ENCODE measurements at regions of chr19 and their contacts with region 1.

Region 1: GRCh38 chr19:6218491-6219162 is 61.1 kb downstream of the MLLT1 start:
- DNase-seq: peak; percentile 75 to 82
- ATAC-seq: peak; percentile 73 to 89
- H3K4me3 ChIP-seq: no peak overlapping the region
- H3K27ac ChIP-seq: no peak overlapping the region
- H3K4me1 ChIP-seq: no peaks in the 10 kb centered on the region
- CTCF ChIP-seq: peak; percentile 65
- EP300 ChIP-seq: no peak
- POLR2A ChIP-seq: no peak
- RAD21 ChIP-seq: peak; percentile 61 to 69

Region 2: GRCh38 chr19:6138066-6138465 is 80.6 kb before region 1 on chr19:
- CTCF ChIA-PET with region 1: no interaction called
- POLR2A ChIA-PET with region 1: no interaction called
- DNase-seq: no peak
- ATAC-seq: no peak
- H3K4me3 ChIP-seq: no peak overlapping the region
- H3K27ac ChIP-seq: no peak overlapping the region
- H3K4me1 ChIP-seq: no peaks in the 10 kb centered on the region
- CTCF ChIP-seq: no peak
- EP300 ChIP-seq: no peak
- POLR2A ChIP-seq: no peak
- RAD21 ChIP-seq: no peak

Region 3: DNA sequence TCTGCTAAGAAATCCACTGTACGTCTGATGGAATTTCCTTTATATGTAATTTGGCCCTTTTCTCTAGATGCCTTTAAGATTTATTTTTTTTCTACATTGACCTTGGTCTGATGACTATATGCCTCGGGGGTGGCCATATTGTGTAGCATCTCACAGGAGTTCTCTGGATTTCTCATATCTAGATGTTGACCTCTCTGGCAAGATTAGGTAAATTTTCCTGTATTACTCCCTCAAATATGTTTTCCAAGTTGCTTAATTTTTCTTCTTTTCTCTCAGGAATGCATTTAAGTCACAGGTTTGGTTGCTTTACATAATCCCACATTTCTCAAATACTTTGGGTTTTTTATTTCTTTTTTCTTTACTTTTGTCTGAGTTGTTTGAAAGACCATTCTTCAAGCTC is 47.1 kb before region 1 on chr19:
- CTCF ChIA-PET with region 1: interaction called, 10 read pairs
- POLR2A ChIA-PET with region 1: no interaction called
- DNase-seq: no peak
- ATAC-seq: no peak
- H3K4me3 ChIP-seq: no peak overlapping the region
- H3K27ac ChIP-seq: no peak overlapping the region
- H3K4me1 ChIP-seq: no peaks in the 10 kb centered on the region
- CTCF ChIP-seq: no peak
- EP300 ChIP-seq: no peak
- POLR2A ChIP-seq: no peak
- RAD21 ChIP-seq: no peak

Region 4: DNA sequence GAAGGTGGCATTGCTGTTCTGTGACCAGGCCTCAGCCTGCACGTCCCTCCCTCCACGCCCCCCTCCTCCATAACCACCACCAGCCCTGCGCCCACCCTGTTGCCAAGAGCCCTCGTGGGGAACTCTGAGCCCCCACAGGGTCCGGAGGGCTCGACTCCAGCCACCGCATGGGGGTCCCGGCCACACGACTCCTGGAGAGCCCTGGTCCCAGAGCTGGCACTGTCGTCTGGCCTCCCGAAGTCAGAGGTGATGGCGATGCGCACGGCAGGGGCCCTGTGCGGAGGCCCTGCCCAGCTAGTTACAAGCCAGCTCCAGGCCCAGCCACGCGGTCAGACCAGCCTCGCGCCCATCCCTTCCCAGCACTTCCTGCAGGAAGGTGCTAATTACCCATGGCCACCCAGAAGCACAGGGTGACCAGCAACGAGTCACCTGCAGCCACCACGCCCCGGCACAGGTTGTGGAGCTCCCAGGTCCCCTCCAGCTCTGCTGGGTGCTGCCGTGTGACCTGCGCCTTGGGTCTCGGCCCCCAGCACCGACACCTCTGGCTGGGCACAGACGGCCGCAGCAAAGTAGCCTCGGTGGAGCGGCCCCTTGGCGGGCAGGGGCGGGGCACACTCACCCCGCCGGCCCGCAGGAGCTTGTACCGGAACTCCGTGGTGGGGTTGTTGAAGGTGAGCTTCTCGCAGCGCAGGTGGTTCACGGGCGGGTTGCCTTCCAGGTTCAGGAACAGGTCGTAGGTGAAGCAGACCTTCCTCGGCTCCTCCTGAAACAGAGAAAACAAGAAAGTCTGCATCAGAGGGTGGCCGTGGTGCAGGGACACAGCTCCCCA is 11.5 kb after region 1 on chr19:
- CTCF ChIA-PET with region 1: interaction called, 12 read pairs
- POLR2A ChIA-PET with region 1: no interaction called
- DNase-seq: no peak
- ATAC-seq: no peak
- H3K4me3 ChIP-seq: no peak overlapping the region
- H3K27ac ChIP-seq: no peak overlapping the region
- H3K4me1 ChIP-seq: no peaks in the 10 kb centered on the region
- CTCF ChIP-seq: no peak
- EP300 ChIP-seq: no peak
- POLR2A ChIP-seq: no peak
- RAD21 ChIP-seq: no peak

Region 5: DNA sequence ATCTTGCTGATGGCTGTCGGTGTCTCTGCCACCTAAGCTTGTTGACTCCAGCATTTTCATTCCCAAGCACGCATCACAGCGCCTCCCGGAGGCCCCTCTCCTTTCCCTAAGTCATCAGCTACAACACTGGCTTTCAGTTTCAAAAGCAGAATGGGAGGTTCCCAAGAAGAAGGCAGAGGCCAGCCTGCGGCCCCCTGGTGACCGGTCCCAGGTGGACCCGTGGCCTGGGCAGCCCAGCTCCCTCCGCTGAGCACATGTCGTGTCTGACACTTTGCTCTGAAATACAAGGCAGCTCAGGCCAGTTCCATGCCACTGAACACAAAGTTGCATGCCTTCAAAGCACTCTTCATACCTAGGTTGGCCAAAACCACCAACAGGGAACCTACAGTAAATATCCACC is 52.6 kb after region 1 on chr19:
- CTCF ChIA-PET with region 1: interaction called, 13 read pairs
- POLR2A ChIA-PET with region 1: no interaction called
- DNase-seq: no peak
- ATAC-seq: no peak; a peak in 1 of 6 replicates
- H3K4me3 ChIP-seq: no peak overlapping the region
- H3K27ac ChIP-seq: no peak overlapping the region
- H3K4me1 ChIP-seq: peaks cover 7% of the 10 kb centered on the region; the same call in 1 of the 3 replicates
- CTCF ChIP-seq: no peak
- EP300 ChIP-seq: no peak
- POLR2A ChIP-seq: no peak
- RAD21 ChIP-seq: no peak